ENCODE measurements at regions of chr15 and their contacts with region 1.

Region 1: DNA sequence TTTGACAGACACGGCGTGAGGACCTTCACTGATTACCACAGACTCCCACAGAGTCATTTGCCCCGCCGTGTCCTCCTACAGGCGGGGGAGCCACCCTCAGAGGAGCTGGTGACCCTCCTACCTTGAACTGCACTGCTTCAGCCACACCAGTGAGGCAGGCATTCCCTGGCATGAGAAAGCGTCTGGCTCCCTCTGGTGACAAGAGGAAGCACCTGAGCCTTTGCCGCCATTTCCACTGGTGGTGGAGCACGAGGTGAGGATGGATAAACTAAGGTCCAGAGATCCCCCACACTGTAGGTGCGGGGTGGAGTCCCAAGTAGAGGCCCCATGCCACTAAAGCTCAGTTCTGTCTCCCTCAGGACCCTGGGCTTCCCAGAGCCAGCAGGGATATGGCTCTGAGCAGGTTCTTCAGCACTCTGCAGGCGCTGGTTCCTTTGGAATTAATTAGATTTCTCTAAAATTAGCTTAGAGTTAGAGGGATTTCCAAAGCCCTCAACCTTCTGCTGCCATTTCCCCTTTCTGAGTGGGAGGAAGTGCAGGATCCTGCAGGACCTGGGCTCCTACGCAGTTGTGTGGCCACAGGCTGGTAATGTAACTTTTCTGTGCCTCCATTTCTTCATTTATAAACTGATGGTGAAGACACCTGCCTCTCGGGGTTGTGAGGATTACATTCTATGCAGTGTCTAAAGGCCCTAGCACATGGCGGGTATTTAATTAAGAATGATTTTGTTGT is 224.0 kb downstream of the SLCO3A1 start:
- DNase-seq: peak; percentile 67
- CTCF ChIP-seq: peak; percentile 75

Region 2: DNA sequence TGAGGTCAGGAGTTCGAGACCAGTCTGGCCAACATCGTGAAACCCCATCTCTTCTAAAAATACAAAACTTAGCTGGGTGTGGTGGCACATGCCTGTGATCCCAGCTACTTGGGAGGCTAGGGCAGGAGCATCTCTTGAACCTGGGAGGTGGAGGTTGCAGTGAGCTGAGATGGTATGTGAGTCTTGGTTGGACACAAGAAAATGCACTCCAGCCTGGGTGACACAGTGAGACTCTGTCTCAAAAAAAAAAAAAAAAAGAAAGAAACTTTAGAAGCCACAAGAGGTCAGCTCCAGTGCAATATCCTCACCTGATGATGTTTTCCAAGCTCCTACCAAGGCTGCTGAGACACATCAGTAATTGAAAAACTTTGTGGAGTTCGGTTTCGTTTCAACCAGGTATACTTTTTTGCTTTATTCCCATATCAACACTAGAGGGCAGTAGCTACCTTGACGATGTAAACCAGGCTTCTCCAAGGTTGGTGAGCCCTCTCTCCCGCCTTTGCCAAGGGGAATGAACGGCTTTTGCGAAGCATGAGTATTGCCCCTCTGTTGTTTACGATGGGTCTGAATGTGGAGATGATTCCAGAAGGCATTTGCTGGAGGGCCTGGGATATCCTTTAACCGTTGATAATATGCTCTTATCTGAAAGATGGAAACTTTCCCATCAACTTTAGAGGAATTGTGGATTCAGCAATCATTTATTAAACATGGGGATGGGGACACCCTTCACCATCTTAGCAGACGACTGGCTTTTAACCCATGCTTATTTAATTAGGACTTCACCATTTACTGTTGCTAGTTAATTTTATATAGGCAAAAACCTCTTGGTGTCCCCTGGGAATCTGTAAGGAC is 774.7 kb before region 1 on chr15:
- in situ Hi-C with region 1: loop called (anchors 10 kb)
- DNase-seq: peak; percentile 72
- CTCF ChIP-seq: peak; percentile 74

Region 3: DNA sequence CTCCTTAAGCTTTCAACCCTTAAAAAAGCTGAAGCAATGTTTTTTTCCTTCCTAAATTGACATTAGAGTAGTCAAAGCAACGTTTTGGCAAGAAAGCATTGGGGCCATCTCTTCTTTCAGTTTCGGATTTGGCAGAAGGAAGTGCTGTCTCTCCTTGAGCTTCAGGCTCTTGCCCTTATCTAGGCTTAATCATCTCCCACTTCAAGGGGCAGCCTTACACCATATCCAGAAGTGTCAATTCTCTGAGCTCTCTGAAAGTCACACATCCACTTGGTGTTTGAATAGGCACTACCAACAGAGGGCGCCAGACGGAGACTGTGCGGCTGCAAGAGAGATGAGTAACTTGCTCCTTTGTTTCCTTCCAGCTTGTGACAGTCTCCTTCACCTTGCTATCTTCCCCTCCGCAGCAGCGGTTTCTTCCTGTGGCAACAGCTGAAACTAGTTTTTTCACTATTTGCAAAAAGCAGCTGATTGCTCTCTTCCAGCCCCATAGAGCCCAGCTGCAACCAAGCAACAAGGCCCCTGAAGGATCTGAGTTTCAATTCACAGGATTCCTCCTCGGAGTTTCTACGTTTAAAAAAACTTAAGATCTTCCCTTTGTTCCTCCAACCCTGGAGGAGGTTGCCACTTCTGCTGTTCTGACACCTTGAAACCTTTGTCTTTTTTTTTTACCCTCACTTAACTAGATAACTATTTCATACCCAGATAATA is 371.0 kb before region 1 on chr15:
- in situ Hi-C with region 1: loop called (anchors 25 kb)
- DNase-seq: peak; percentile 31
- CTCF ChIP-seq: peak; percentile 75

Region 4: DNA sequence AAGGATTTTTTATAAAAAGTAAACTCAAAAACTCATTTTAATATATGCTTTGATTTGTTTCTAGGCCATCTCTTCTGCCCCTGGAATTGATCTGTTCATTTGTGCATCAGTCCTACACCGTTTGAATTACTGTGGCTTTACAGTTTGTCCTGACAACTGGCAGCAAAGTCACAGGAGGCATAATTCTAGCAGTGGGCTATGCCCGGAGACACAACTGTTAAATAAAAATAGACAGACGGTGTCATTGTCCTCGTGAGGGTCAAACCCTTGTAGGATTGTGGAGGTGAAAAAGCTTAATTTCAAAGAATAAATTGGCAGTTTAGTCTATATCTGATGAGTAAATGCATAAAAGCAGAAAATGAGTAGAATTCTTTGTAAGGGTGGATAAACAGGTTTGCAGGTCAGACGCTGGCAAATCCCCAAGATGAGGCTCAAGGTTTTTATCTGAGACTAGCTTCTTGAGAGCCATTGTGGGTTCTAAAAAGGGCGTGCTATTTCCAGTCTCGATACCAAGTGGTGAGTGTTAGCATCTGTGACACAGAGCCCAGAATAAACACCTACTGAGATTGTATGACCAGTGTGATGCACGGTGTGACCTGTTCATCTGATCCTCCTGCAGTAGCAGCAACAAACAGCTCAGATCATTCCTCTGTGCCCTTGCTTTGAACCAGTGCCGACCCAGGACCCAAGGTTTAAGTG is 275.5 kb before region 1 on chr15:
- in situ Hi-C with region 1: no loop called
- DNase-seq: no peak
- CTCF ChIP-seq: no peak

Region 5: GRCh38 chr15:92247649-92248242 is 170.2 kb after region 1 on chr15:
- in situ Hi-C with region 1: no loop called
- DNase-seq: no peak
- CTCF ChIP-seq: no peak

Region 6: DNA sequence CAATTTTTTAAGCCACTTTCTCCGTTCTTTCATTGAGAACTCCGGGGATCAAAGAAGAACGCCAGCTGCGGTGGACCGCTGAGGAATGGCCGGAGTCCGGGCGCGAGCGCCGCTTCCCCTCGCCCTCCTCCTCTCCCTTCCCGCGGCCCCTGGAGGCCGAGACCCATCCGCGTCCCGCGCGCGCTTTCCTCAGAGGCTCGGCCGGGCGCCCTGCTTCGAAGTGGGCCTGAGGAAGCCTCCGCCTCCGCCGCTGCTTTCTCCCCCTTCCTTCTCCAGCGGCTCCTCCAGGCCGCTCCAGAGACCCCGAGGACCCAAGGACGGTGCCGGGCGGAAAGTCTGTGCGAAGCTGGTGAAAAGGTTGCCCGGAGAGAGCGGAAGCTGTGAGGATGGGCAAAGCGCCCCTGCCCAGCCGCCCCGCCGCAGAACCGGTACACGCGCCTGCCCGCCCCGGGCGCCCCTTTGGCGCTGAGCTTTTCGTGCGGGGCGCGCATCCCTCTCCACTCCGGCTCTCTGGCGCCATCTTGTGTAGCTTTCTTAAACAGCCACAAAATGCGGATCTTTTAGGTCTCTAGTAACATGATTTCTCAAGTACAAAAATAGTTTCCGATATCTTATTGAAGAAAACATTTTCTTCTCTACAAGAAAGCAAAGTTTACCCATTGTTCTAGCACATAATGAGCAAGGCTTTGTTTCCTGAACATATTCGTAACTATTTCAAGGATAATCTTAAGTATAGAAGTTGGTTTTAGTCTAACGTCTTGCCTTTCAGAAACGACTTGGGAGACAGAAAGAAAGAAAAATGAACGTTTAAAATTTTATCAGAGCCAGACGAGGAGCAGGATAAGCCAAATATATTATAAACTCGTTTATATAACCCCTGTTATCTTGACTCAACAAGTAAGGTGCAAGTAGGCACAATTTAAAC is 637.2 kb after region 1 on chr15:
- in situ Hi-C with region 1: loop called (anchors 25 kb)
- DNase-seq: peak; percentile 85
- CTCF ChIP-seq: peak; percentile 88

Measured in GM13977 (cell line).